AG04450 (cell line): ENCODE measurements at regions of chr11 and their contacts with region 1.

Region 1: GRCh38 chr11:120229451-120230424 is 10.2 kb upstream of the POU2F3 start:
- DNase-seq: no peak
- H3K4me3 ChIP-seq: no peak overlapping the region
- H3K27ac ChIP-seq: peak overlapping the region; percentile 21
- H3K27me3 ChIP-seq: peaks cover 16% of the 10 kb centered on the region
- CTCF ChIP-seq: peak; percentile 72

Region 2: GRCh38 chr11:120182790-120183491 is 46.8 kb before region 1 on chr11:
- CTCF ChIA-PET with region 1: interaction called, 19 read pairs
- POLR2A ChIA-PET with region 1: no interaction called
- DNase-seq: no peak
- H3K4me3 ChIP-seq: no peak overlapping the region
- H3K27ac ChIP-seq: no peak overlapping the region
- H3K27me3 ChIP-seq: no peaks in the 10 kb centered on the region
- CTCF ChIP-seq: peak; percentile 34

Region 3: DNA sequence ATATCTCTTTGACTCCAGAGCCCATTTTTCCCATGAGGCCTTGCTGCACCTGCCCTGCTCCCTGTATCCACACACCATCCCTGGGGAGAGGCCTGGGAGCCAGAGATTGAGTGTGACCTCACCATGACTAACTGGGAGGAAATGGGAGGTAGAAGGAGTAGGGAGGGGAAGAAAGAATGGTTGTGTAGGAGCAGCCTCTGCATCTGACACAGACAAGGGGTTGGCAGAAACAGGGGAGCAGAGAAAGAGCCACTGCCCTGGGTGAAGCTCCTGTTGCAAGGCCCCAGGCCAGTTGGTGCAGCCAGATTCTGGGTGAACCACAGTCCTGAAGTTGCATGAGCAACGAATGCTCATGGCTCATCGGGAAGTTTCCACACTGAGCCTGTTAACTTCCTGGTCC is 42.6 kb after region 1 on chr11:
- CTCF ChIA-PET with region 1: no interaction called
- POLR2A ChIA-PET with region 1: no interaction called
- DNase-seq: no peak
- H3K4me3 ChIP-seq: no peak overlapping the region
- H3K27ac ChIP-seq: no peak overlapping the region
- H3K27me3 ChIP-seq: peaks cover 21% of the 10 kb centered on the region
- CTCF ChIP-seq: no peak

Region 4: GRCh38 chr11:120547811-120548681 is 318.3 kb after region 1 on chr11:
- CTCF ChIA-PET with region 1: no interaction called
- POLR2A ChIA-PET with region 1: no interaction called
- DNase-seq: peak; percentile 93
- H3K4me3 ChIP-seq: no peak overlapping the region
- H3K27ac ChIP-seq: peak overlapping the region; percentile 94
- H3K27me3 ChIP-seq: no peaks in the 10 kb centered on the region
- CTCF ChIP-seq: peak; percentile 13; the same call in 1 of the 2 replicates